ENCODE measurements at regions of chr11 and their contacts with region 1.

Region 1: GRCh38 chr11:70191495-70192140 is 11.5 kb upstream of the FADD start:
- DNase-seq: peak; percentile 56
- H3K4me3 ChIP-seq: no peak overlapping the region
- H3K27ac ChIP-seq: no peak overlapping the region
- H3K4me1 ChIP-seq: peaks cover 10% of the 10 kb centered on the region
- H3K27me3 ChIP-seq: no peaks in the 10 kb centered on the region
- CTCF ChIP-seq: peak; percentile 92 to 97

Region 2: DNA sequence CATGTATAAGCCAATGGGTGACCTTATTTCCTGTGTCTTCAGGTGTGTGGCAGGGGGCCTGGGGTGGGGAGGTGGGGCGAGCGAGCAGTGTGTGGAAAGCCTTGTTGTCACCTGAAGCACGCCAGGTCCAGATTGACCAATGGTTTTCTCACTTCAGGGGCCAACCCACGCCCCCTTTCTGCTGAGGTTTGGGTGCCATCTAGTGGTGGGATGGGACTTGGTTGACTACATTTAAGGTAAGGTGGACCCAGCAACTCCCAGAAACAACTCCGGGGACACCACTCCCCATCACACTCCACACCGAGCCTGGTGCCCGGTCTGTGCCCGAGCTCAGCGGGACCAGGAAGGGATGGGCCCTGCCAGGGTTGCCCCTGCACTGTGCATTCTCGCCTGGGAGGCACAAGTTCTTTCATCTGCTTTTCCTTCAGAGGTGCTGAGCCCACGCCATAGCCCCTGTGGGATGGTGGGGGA is 1102.9 kb before region 1 on chr11:
- CTCF ChIA-PET with region 1: no interaction called
- dilution Hi-C with region 1: no loop called
- in situ Hi-C with region 1: loop called in 1 of 2 experiments (anchors 25 kb)
- intact Hi-C with region 1: no loop called
- DNase-seq: peak; percentile 70
- H3K4me3 ChIP-seq: no peak overlapping the region
- H3K27ac ChIP-seq: no peak overlapping the region
- H3K4me1 ChIP-seq: peaks cover 7% of the 10 kb centered on the region
- H3K27me3 ChIP-seq: no peaks in the 10 kb centered on the region
- CTCF ChIP-seq: peak; percentile 74 to 81

Region 3: DNA sequence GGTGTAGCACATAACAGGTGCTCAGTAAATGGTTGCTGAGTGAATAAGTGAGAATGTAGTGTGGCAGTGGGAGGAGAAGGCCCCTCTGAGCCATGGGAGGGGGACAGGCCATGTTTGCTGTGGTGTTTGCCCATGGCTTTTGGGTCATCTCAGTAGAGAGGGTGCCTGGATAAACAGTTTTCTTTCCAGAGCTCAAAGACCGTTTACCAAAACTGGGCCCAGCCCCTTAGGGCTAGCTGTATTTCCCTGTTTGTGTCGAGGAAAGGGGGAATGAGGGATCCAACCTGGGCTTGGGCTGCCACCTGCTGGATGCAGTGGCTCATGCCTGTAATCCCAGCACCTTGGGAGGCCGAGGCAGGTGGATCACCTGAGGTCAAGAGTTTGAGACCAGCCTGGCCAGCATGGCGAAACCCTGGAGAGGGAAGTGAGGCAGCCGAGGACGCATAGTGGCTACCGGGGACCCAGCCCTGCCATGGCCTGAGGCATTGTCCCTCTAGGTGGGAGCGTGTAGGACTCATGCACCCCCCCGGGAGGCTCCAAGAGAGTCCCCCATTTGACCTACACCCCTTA is 507.8 kb before region 1 on chr11:
- CTCF ChIA-PET with region 1: no interaction called
- dilution Hi-C with region 1: no loop called
- in situ Hi-C with region 1: loop called in 1 of 2 experiments (anchors 5 kb)
- intact Hi-C with region 1: loop called (anchors 1 kb)
- DNase-seq: peak; percentile 30
- H3K4me3 ChIP-seq: no peak overlapping the region
- H3K27ac ChIP-seq: no peak overlapping the region
- H3K4me1 ChIP-seq: peaks cover 11% of the 10 kb centered on the region
- H3K27me3 ChIP-seq: no peaks in the 10 kb centered on the region
- CTCF ChIP-seq: peak; percentile 43 to 71

Region 4: GRCh38 chr11:69704508-69705253 is 486.9 kb before region 1 on chr11:
- CTCF ChIA-PET with region 1: interaction called, 9 read pairs
- dilution Hi-C with region 1: no loop called
- in situ Hi-C with region 1: no loop called
- intact Hi-C with region 1: loop called (anchors 1 kb)
- DNase-seq: no peak
- H3K4me3 ChIP-seq: no peak overlapping the region
- H3K27ac ChIP-seq: no peak overlapping the region
- H3K4me1 ChIP-seq: peaks cover 19% of the 10 kb centered on the region
- H3K27me3 ChIP-seq: peaks cover 8% of the 10 kb centered on the region
- CTCF ChIP-seq: no peak

Region 5: DNA sequence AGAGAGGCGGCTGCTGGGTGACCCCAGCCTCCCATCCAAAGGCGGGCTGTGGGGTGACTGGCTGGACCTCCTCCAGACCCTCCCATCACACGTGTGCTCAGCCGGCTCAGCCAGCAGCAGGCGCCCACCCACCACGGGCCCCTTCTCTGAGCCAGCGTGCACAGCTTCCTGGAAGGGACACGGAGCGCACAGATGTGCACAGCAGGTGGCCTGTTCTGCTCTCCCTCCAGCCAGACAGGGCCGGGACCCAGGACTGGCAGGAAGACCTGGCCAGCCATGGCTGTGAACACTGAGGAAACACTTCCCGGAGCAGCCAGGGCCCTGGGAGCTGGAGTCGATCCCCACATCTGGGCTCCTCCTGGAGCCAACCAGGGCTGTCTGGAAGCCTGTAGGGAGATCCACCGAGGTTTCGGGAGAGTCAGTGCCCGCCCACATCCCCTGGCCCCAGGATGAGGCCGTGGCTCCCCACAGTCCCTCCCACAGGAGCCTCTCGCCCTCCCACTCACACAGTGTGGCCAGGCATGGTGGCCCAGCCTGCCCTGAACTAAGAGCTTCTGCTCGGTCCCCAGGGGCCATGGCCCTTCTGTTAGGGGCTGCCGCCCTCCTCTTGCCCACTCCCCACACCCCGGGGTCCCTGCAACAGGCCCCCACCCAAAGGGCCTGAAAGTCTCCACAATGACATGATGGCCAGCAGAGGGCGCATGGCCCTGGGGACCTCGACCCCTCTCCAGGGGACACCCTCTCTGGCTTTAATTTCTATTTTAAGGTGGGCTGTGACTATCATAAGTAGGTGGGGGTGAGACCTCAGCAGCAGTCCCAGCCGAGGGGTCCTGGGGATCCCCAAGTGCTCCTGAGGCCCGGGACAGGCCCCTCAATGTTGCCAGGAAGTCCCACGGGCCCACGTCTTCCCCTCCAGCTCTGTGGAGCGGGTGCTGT is 281.8 kb before region 1 on chr11:
- CTCF ChIA-PET with region 1: interaction called, 3 read pairs
- dilution Hi-C with region 1: no loop called
- in situ Hi-C with region 1: loop called (anchors 5 kb)
- intact Hi-C with region 1: loop called (anchors 1 kb)
- DNase-seq: no peak
- H3K4me3 ChIP-seq: no peak overlapping the region
- H3K27ac ChIP-seq: no peak overlapping the region
- H3K4me1 ChIP-seq: peaks cover 28% of the 10 kb centered on the region
- H3K27me3 ChIP-seq: no peaks in the 10 kb centered on the region
- CTCF ChIP-seq: peak; percentile 35 to 65

Region 6: GRCh38 chr11:69943066-69943465 is 248.6 kb before region 1 on chr11:
- CTCF ChIA-PET with region 1: no interaction called
- dilution Hi-C with region 1: no loop called
- in situ Hi-C with region 1: no loop called
- intact Hi-C with region 1: loop called (anchors 1 kb)
- DNase-seq: peak; percentile 26
- H3K4me3 ChIP-seq: no peak overlapping the region
- H3K27ac ChIP-seq: no peak overlapping the region
- H3K4me1 ChIP-seq: peaks cover 7% of the 10 kb centered on the region
- H3K27me3 ChIP-seq: no peaks in the 10 kb centered on the region
- CTCF ChIP-seq: peak in 1 of 2 donors; percentile 25

Region 7: DNA sequence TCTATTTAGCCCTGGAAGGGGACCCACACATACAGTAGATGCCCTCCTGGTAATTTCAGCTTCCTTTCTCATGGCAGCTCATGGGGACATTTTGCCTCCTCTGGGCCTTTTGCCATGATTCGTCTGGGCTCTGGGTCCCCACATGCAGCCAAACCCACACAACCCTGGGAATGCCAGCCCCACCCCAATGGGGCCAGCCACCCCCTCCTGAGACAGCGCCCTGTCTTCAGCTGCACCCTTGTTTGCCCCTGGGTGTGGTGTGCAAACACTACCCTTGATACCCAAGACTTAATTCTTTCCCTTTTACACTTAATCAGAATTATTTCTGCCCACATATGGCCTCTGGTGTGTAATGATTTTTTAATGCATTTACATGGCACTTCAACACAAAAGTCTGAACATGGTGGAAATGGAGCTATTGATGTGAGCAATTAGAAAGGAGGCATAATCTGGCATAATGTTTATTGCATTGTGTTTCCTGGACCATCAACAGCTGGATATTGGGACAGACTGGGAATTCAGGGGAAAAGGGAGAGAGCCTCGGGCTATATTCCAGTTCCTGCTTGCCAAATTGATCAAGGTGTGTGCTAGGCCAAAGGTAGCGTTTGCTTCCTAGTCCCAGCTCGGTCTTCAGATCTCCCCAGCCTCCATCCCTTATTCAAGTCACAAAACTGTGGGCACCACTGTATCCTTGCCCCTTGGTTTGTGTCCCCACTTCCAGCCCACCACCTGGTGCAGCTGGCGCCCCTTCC is 198.5 kb before region 1 on chr11:
- CTCF ChIA-PET with region 1: no interaction called
- dilution Hi-C with region 1: no loop called
- in situ Hi-C with region 1: no loop called
- intact Hi-C with region 1: loop called (anchors 5 kb)
- DNase-seq: peak; percentile 43
- H3K4me3 ChIP-seq: no peak overlapping the region
- H3K27ac ChIP-seq: peak overlapping the region; percentile 0
- H3K4me1 ChIP-seq: peaks cover 29% of the 10 kb centered on the region
- H3K27me3 ChIP-seq: no peaks in the 10 kb centered on the region
- CTCF ChIP-seq: no peak

Region 8: DNA sequence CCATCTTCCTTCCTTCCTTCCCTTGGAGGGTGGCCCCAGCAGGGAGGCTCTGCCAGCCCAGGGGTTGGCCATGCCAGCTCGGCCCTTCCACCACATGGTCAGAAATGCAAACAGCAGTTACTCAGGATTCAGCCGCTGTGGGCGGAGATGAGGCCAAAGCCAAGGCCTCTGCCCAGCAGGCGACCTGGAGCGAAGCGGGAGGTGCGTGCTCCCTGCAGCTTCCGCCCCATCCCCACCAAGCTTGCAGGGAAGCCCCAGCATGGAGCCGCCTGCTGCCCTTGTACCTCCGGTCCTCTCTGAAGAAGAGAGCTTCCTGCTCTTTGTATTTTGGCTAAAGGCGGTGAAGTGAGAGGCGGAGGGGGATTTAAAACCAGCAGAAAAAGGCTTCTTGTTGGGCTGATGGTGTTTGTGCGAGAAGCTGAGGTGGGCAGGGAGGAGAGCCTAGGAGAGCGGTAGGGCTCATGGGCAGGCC is 63.1 kb before region 1 on chr11:
- CTCF ChIA-PET with region 1: no interaction called
- dilution Hi-C with region 1: no loop called
- in situ Hi-C with region 1: no loop called
- intact Hi-C with region 1: no loop called
- DNase-seq: peak; percentile 60
- H3K4me3 ChIP-seq: no peak overlapping the region
- H3K27ac ChIP-seq: no peak overlapping the region
- H3K4me1 ChIP-seq: peaks cover 46% of the 10 kb centered on the region
- H3K27me3 ChIP-seq: no peaks in the 10 kb centered on the region
- CTCF ChIP-seq: peak in 1 of 2 donors; percentile 39

Region 9: DNA sequence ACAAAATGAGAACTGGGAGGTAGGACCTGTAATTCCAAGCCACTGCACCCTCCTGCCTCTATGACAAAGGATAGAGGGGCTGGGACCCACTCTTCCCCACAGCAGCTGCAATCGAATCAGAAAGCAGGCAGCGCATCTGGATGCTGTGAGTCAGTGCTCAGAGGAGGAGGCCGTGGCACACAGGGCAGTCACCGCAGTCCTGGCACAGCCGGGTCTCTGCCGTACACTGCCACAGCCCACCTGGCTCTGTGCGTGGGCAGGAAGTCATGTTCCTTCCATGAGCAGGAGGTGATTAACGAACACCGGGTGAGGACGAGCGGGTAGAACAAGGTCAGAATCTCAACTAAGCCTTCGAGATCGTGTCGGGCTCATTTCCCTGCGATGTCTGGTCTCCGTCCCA is 48.7 kb after region 1 on chr11:
- CTCF ChIA-PET with region 1: no interaction called
- dilution Hi-C with region 1: no loop called
- in situ Hi-C with region 1: no loop called
- intact Hi-C with region 1: no loop called
- DNase-seq: peak; percentile 73
- H3K4me3 ChIP-seq: peak overlapping the region in 2 of 3 experiments; percentile 20 to 28
- H3K27ac ChIP-seq: no peak overlapping the region
- H3K4me1 ChIP-seq: peaks cover 17% of the 10 kb centered on the region
- H3K27me3 ChIP-seq: no peaks in the 10 kb centered on the region
- CTCF ChIP-seq: no peak